ENCODE measurements at regions of chr14 and their contacts with region 1.

Region 1: GRCh38 chr14:94136575-94137331 is 7.3 kb upstream of the IFI27L2 start:
- DNase-seq: peak; percentile 86
- H3K4me3 ChIP-seq: no peak overlapping the region
- H3K27ac ChIP-seq: no peak overlapping the region
- H3K4me1 ChIP-seq: peaks cover 3% of the 10 kb centered on the region
- H3K27me3 ChIP-seq: peaks cover 22% of the 10 kb centered on the region
- CTCF ChIP-seq: peak; percentile 99

Region 2: GRCh38 chr14:94036313-94037050 is 100.3 kb before region 1 on chr14:
- intact Hi-C with region 1: loop called (anchors 10 kb)
- DNase-seq: peak; percentile 72
- H3K4me3 ChIP-seq: no peak overlapping the region
- H3K27ac ChIP-seq: no peak overlapping the region
- H3K4me1 ChIP-seq: peaks cover 23% of the 10 kb centered on the region
- H3K27me3 ChIP-seq: no peaks in the 10 kb centered on the region
- CTCF ChIP-seq: peak; percentile 91

Region 3: DNA sequence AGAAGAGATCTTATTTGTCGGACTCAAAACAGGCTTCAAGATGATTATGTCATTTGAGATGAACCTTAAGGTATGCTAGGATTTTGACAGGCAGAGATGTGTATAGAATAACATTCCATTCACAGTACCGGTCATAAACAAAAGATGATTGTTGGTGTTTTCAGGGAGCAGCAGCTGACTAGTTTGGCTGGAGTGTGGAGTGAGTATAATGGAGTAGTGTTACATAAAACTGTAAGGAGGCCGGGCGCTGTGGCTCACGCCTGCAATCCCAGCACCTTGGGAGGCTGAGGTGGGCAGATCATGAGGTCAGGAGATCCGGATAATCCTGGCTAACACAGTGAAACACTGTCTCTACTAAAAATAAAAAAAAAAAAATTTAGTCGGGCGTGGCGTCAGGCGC is 132.4 kb after region 1 on chr14:
- intact Hi-C with region 1: no loop called
- DNase-seq: no peak
- H3K4me3 ChIP-seq: no peak overlapping the region
- H3K27ac ChIP-seq: no peak overlapping the region
- H3K4me1 ChIP-seq: no peaks in the 10 kb centered on the region
- H3K27me3 ChIP-seq: peaks cover 36% of the 10 kb centered on the region
- CTCF ChIP-seq: no peak